Kidney (tissue), 22 donors: ENCODE measurements at regions of chr1 and their contacts with region 1.

Region 1: GRCh38 chr1:165586435-165586834 is 42.6 kb downstream of the LRRC52 start:
- DNase-seq: no peak
- H3K4me3 ChIP-seq: no peak overlapping the region
- H3K27ac ChIP-seq: no peak overlapping the region
- H3K4me1 ChIP-seq: no peaks in the 10 kb centered on the region
- H3K27me3 ChIP-seq: no peaks in the 10 kb centered on the region
- CTCF ChIP-seq: no peak

Region 2: DNA sequence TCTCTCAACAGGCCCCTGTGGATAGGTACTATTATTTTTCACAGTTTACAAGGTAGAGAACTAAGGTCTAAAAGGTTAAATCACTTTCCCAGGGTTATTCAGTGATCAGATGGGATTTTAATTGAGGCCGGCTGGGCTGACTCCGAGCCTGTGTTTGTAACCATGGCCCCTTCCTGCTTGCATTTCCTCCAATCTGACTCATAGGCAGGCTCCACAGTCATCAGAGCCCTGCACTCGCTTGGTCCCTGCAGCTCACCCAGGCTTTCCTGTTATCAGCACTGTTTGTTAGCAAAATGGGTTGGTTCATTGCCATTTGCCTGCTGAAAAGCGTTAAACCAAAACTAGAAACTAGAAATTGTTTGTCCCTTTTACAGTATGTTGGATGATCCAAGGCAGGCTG is 188.5 kb before region 1 on chr1:
- intact Hi-C with region 1: loop called (anchors 5 kb)
- DNase-seq: peak in 1 of 5 donors; percentile 25
- H3K4me3 ChIP-seq: no peak overlapping the region
- H3K27ac ChIP-seq: no peak overlapping the region
- H3K4me1 ChIP-seq: no peaks in the 10 kb centered on the region
- H3K27me3 ChIP-seq: no peaks in the 10 kb centered on the region
- CTCF ChIP-seq: no peak